ENCODE measurements at regions of chr4 and their contacts with region 1.

Region 1: DNA sequence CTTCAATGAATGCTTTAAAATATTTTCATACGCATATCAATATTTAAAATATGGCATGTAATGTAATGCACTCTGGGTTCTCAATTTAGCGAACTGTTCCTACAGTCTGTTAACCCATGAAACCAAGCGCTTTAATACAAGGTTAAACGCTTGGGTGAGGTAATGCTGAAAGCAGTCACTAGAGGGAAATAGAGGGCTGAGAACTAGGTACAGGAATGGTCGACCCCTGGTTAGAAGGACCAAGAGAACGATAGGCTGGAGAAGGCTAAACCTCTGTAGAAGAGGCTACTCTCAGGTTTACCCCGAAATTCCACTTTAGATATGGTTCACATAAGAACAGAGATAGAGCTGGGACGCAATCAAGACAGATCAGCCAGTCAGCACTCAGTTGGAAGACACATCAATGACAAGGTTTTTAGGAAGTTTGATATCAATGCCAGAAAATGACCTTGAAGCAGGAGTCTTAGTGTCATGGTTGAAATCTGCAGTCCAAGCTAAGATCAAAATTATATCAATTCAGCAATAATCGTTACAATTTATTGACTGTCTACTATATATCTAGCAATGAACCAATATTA is 26.9 kb downstream of the ARSJ start:
- DNase-seq: peak; percentile 64
- ATAC-seq: peak; percentile 95
- H3K4me3 ChIP-seq: no peak overlapping the region
- H3K27ac ChIP-seq: no peak overlapping the region
- H3K4me1 ChIP-seq: peaks cover under 1 to 15% of the 10 kb centered on the region in 2 experiments; a peak in 2 of 4 replicates
- H3K27me3 ChIP-seq: no peaks in the 10 kb centered on the region
- CTCF ChIP-seq: peak; percentile 79 to 89 (median 82)
- POLR2A ChIP-seq: no peak
- RAD21 ChIP-seq: peak; percentile 89

Region 2: DNA sequence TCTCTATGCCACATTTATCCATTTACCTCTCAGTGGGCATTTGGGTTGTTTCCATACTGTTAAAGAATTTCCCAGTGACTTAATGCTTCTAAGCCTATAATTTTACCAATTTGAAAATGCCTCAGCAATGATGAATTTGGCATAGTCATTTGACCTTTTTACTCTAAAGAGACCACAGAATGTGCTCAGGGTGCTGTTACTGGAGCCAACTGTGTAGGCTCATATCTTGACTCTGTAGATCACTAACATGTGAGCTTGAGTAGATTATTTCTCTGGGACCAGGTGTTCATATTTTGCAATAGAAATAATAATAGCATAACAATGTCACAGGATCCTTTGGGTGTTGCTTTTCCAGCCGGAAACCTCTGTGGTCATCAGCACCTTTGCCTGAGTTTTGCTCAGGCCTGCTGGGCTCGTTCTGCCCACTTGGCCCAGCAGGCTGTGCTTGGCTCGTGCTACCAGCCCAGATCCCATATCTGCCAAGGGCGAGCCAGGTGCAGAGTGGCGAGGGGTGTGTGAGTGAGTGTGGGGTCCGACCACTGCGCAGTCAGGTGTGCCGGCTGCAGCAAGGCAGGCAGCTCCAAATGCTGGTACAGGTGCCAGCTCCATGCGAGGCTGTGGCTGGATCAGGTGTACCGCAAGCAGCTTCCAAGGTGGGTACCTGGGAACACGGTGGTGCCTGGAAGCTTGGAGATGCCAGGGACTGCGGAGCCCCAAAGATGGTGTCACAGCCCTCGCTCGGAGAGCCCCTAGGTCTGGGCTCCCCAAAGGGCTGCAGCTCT is 973.7 kb before region 1 on chr4:
- CTCF ChIA-PET with region 1: no interaction called
- POLR2A ChIA-PET with region 1: no interaction called
- RAD21 ChIA-PET with region 1: no interaction called
- intact Hi-C with region 1: no loop called
- DNase-seq: no peak
- ATAC-seq: no peak
- H3K4me3 ChIP-seq: no peak overlapping the region
- H3K27ac ChIP-seq: no peak overlapping the region
- H3K4me1 ChIP-seq: no peaks in the 10 kb centered on the region
- H3K27me3 ChIP-seq: no peaks in the 10 kb centered on the region
- CTCF ChIP-seq: no peak
- POLR2A ChIP-seq: no peak
- RAD21 ChIP-seq: no peak

Region 3: DNA sequence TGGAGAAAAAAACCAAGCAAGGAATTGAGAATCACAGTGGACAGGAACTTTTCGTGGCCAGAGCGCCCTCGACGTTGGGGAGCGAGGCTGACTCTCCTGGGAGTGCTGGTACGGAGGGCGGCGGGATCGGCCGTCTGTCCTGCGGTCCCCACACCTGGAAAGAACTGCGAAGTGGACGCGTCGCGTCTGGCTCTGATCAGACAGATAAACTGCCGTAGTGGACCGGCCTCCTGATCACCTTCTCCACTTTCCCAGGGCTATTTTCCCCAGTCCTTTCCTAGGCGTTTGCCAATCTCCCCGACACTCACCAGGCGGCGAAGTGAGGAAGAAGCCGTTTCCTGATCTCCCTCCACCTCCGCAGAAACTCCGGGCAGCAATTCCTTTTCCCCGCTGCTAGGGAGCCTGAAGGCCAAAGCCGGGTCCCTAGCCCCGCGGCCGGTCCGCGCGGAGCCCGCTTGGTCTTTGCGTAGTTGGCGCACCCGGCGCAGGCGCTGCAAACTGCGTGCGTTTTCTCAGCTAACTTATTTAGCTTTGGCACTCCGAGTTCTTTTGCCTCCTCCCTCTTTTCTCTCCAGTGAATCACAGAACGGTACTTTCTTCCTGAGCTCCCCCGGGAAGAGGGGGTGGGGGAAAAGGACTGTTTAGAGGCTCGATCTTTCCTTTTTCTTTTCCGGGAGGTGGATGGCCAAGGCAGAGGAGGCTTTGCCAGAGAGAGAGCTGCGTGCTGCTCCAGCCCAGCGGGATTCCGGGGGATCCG is 26.8 kb after region 1 on chr4 and contains the start of gene ARSJ:
- CTCF ChIA-PET with region 1: no interaction called
- POLR2A ChIA-PET with region 1: no interaction called
- RAD21 ChIA-PET with region 1: no interaction called
- intact Hi-C with region 1: no loop called
- DNase-seq: peak; percentile 32
- ATAC-seq: peak; percentile 85
- H3K4me3 ChIP-seq: peak within 1 kb of the TSS; percentile 65 to 76
- H3K27ac ChIP-seq: peak within 1 kb of the TSS; percentile 10
- H3K4me1 ChIP-seq: peaks cover 0 to 19% of the 10 kb centered on the region in 2 experiments; a peak in 2 of 4 replicates
- H3K27me3 ChIP-seq: no peaks in the 10 kb centered on the region
- CTCF ChIP-seq: peak in 1 of 3 experiments; percentile 5; a peak in 1 of 6 replicates
- POLR2A ChIP-seq: no peak
- RAD21 ChIP-seq: no peak
- total RNA-seq, gene ARSJ: 2.3 TPM

Region 4: GRCh38 chr4:114057746-114058145 is 105.2 kb after region 1 on chr4:
- CTCF ChIA-PET with region 1: interaction called, 5 read pairs
- POLR2A ChIA-PET with region 1: no interaction called
- RAD21 ChIA-PET with region 1: no interaction called
- intact Hi-C with region 1: loop called (anchors 2 kb)
- DNase-seq: peak; percentile 10
- ATAC-seq: peak; percentile 59
- H3K4me3 ChIP-seq: no peak overlapping the region
- H3K27ac ChIP-seq: no peak overlapping the region
- H3K4me1 ChIP-seq: peaks cover 0 to 7% of the 10 kb centered on the region in 2 experiments; a peak in 2 of 4 replicates
- H3K27me3 ChIP-seq: no peaks in the 10 kb centered on the region
- CTCF ChIP-seq: peak; percentile 23 to 29 (median 29); a peak in 4 of 6 replicates
- POLR2A ChIP-seq: no peak
- RAD21 ChIP-seq: peak; percentile 44; the same call in 1 of the 2 replicates

Region 5: DNA sequence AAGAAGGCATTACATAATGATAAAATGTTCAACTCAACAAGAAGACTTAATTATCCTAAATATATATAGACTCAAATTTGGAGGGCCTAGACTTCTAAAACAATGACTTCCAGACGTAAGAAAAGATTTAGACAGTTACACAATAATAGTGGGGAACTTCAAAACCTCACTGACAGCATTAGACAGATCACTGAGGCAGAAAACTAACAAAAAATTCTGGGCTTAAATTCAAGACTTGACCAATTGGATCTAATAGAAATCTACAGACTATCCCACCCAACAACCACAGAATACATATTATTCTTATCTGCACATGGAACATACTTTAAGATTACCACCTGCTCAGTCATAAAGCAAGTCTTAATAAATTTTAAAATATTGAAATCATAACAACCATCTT is 120.2 kb after region 1 on chr4:
- CTCF ChIA-PET with region 1: interaction called, 5 read pairs
- POLR2A ChIA-PET with region 1: no interaction called
- RAD21 ChIA-PET with region 1: interaction called in 1 of 2 experiments, 3 read pairs
- intact Hi-C with region 1: loop called (anchors 5 kb)
- DNase-seq: no peak
- ATAC-seq: no peak
- H3K4me3 ChIP-seq: no peak overlapping the region
- H3K27ac ChIP-seq: no peak overlapping the region
- H3K4me1 ChIP-seq: peaks cover 0 to 8% of the 10 kb centered on the region in 2 experiments; a peak in 2 of 4 replicates
- H3K27me3 ChIP-seq: no peaks in the 10 kb centered on the region
- CTCF ChIP-seq: no peak
- POLR2A ChIP-seq: no peak
- RAD21 ChIP-seq: no peak

Region 6: GRCh38 chr4:114180481-114180880 is 227.9 kb after region 1 on chr4:
- CTCF ChIA-PET with region 1: no interaction called
- POLR2A ChIA-PET with region 1: no interaction called
- RAD21 ChIA-PET with region 1: no interaction called
- intact Hi-C with region 1: loop called (anchors 2 kb)
- DNase-seq: peak; percentile 47
- ATAC-seq: peak; percentile 90
- H3K4me3 ChIP-seq: no peak overlapping the region
- H3K27ac ChIP-seq: no peak overlapping the region
- H3K4me1 ChIP-seq: no peaks in the 10 kb centered on the region; a peak in 1 of 4 replicates
- H3K27me3 ChIP-seq: no peaks in the 10 kb centered on the region
- CTCF ChIP-seq: peak; percentile 60 to 73 (median 72)
- POLR2A ChIP-seq: no peak
- RAD21 ChIP-seq: peak; percentile 54

Region 7: GRCh38 chr4:114378306-114378903 is 425.9 kb after region 1 on chr4:
- CTCF ChIA-PET with region 1: interaction called, 25 read pairs
- POLR2A ChIA-PET with region 1: no interaction called
- RAD21 ChIA-PET with region 1: no interaction called
- intact Hi-C with region 1: loop called (anchors 1 kb)
- DNase-seq: no peak
- ATAC-seq: no peak
- H3K4me3 ChIP-seq: no peak overlapping the region
- H3K27ac ChIP-seq: no peak overlapping the region
- H3K4me1 ChIP-seq: peaks cover 0 to 1% of the 10 kb centered on the region in 2 experiments; a peak in 1 of 4 replicates
- H3K27me3 ChIP-seq: no peaks in the 10 kb centered on the region
- CTCF ChIP-seq: peak; percentile 18 to 64 (median 46); a peak in 3 of 6 replicates
- POLR2A ChIP-seq: no peak
- RAD21 ChIP-seq: peak; percentile 80

Region 8: DNA sequence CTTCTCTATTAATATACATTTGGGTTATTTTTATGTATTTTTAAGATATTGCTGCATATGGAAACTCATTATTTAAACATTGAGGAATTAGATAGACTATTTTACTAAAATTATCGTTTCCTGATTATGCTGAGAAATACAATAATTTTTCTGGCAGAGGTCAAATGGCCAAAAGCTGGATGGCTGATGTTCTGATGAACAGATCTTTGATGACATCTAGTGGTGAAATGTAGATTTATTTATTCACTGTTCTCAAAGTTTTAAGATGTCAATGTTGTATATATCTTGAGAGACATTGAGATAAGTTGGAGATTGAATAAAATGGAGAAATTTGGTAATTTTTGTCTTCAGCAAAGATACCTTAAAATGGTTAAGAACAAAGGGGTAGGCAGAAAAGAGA is 742.2 kb after region 1 on chr4:
- CTCF ChIA-PET with region 1: no interaction called
- POLR2A ChIA-PET with region 1: no interaction called
- RAD21 ChIA-PET with region 1: no interaction called
- intact Hi-C with region 1: loop called (anchors 10 kb)
- DNase-seq: peak; percentile 28
- ATAC-seq: peak; percentile 64
- H3K4me3 ChIP-seq: no peak overlapping the region
- H3K27ac ChIP-seq: no peak overlapping the region
- H3K4me1 ChIP-seq: no peaks in the 10 kb centered on the region
- H3K27me3 ChIP-seq: no peaks in the 10 kb centered on the region
- CTCF ChIP-seq: peak; percentile 33 to 62 (median 57); a peak in 4 of 6 replicates
- POLR2A ChIP-seq: no peak
- RAD21 ChIP-seq: peak; percentile 79

Measured in HCT116 (cell line).